ENCODE measurements at regions of chr15 and their contacts with region 1.

Region 1: GRCh38 chr15:76973362-76973743 is 21.6 kb upstream of the PSTPIP1 start:
- DNase-seq: no peak
- ATAC-seq: peak; percentile 86
- H3K4me3 ChIP-seq: no peak overlapping the region
- H3K27ac ChIP-seq: no peak overlapping the region
- H3K4me1 ChIP-seq: no peaks in the 10 kb centered on the region
- H3K27me3 ChIP-seq: no peaks in the 10 kb centered on the region
- CTCF ChIP-seq: peak; percentile 72 to 79 (median 73)
- EP300 ChIP-seq: no peak
- POLR2A ChIP-seq: no peak
- RAD21 ChIP-seq: peak; percentile 89

Region 2: GRCh38 chr15:76941636-76942035 is 31.7 kb before region 1 on chr15:
- CTCF ChIA-PET with region 1: interaction called, 16 read pairs
- POLR2A ChIA-PET with region 1: no interaction called
- RAD21 ChIA-PET with region 1: interaction called, 5 read pairs
- SMC1A ChIA-PET with region 1: interaction called, 5 read pairs
- in situ Hi-C with region 1: no loop called
- intact Hi-C with region 1: no loop called
- DNase-seq: no peak
- ATAC-seq: no peak
- H3K4me3 ChIP-seq: no peak overlapping the region
- H3K27ac ChIP-seq: no peak overlapping the region
- H3K4me1 ChIP-seq: peaks cover 2% of the 10 kb centered on the region; the same call in 1 of the 2 replicates
- H3K27me3 ChIP-seq: no peaks in the 10 kb centered on the region
- CTCF ChIP-seq: no peak
- EP300 ChIP-seq: no peak
- POLR2A ChIP-seq: no peak
- RAD21 ChIP-seq: no peak

Region 3: GRCh38 chr15:77002954-77003912 is 29.9 kb after region 1 on chr15:
- CTCF ChIA-PET with region 1: interaction called, 30 read pairs
- POLR2A ChIA-PET with region 1: interaction called, 4 read pairs
- RAD21 ChIA-PET with region 1: interaction called, 16 read pairs
- SMC1A ChIA-PET with region 1: interaction called, 99 read pairs
- in situ Hi-C with region 1: no loop called
- intact Hi-C with region 1: no loop called
- DNase-seq: peak; percentile 77
- ATAC-seq: peak; percentile 90
- H3K4me3 ChIP-seq: peak overlapping the region; percentile 26; the same call in 1 of the 2 replicates
- H3K27ac ChIP-seq: peak overlapping the region; percentile 16
- H3K4me1 ChIP-seq: peaks cover 27% of the 10 kb centered on the region
- H3K27me3 ChIP-seq: no peaks in the 10 kb centered on the region
- CTCF ChIP-seq: no peak
- EP300 ChIP-seq: peak in 1 of 2 experiments; percentile 20; a peak in 1 of 4 replicates
- POLR2A ChIP-seq: no peak
- RAD21 ChIP-seq: no peak

Region 4: DNA sequence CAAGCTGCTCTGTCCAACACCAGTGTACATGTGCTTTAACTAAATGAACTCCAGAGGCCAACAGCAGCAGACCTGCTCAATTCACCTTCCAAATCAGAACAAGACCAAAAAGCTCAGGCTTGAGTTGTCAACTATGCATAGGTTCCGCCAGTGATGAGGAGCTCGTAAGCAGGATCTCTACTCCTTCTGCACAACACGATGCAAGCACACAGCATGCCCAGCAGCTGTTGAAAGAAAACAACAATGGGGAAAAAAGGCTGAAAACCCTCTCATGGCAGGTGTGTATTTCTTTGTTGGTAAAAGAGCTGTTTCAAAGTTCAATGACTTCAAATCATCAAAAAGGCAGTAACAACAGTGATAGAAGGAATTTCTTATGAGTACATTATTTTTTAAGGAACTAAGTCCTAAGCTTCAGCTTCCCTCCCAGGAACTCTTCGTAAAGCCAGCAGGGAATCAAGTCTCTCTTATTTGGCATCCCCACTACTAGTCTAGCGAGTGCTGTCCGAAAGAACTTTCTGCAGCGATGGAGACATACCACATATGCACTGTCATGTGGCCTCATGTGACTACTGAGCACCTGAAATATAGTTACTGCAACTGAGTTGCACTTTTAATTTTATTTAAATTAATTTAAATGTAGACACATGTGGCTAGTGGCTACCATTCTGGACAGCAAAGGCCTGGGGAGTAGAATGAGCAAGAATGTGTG is 73.5 kb after region 1 on chr15:
- CTCF ChIA-PET with region 1: interaction called, 9 read pairs
- POLR2A ChIA-PET with region 1: no interaction called
- RAD21 ChIA-PET with region 1: interaction called, 3 read pairs
- SMC1A ChIA-PET with region 1: interaction called, 10 read pairs
- in situ Hi-C with region 1: no loop called
- intact Hi-C with region 1: no loop called
- DNase-seq: no peak
- ATAC-seq: no peak
- H3K4me3 ChIP-seq: no peak overlapping the region
- H3K27ac ChIP-seq: no peak overlapping the region
- H3K4me1 ChIP-seq: no peaks in the 10 kb centered on the region
- H3K27me3 ChIP-seq: no peaks in the 10 kb centered on the region
- CTCF ChIP-seq: no peak
- EP300 ChIP-seq: no peak
- POLR2A ChIP-seq: no peak
- RAD21 ChIP-seq: no peak

Region 5: GRCh38 chr15:77099741-77100463 is 126.5 kb after region 1 on chr15:
- CTCF ChIA-PET with region 1: interaction called, 23 read pairs
- POLR2A ChIA-PET with region 1: no interaction called
- RAD21 ChIA-PET with region 1: interaction called, 6 read pairs
- SMC1A ChIA-PET with region 1: interaction called, 23 read pairs
- in situ Hi-C with region 1: no loop called
- intact Hi-C with region 1: no loop called
- DNase-seq: no peak
- ATAC-seq: no peak
- H3K4me3 ChIP-seq: no peak overlapping the region
- H3K27ac ChIP-seq: no peak overlapping the region
- H3K4me1 ChIP-seq: no peaks in the 10 kb centered on the region
- H3K27me3 ChIP-seq: no peaks in the 10 kb centered on the region; a peak in 1 of 4 replicates
- CTCF ChIP-seq: no peak
- EP300 ChIP-seq: no peak
- POLR2A ChIP-seq: no peak
- RAD21 ChIP-seq: no peak

Region 6: DNA sequence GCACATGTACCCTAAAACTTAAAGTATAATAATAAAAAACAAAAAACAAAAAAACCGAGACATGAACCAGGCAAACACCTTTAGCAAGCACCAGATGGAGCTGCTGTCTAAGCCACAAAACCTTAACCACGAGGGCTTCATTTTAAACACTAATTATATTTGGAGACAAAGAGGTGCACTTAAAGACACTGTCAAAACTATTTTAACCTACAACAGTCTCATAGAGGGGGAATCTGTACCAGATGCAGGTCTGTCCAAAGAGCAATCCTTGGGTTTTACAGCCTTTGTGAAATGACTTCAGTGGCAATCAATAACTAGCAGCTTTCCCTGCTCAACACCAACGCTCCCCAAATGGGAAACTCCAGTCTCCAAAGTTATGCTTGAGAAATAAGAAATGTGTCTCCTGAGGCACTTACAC is 213.2 kb after region 1 on chr15:
- CTCF ChIA-PET with region 1: interaction called, 44 read pairs
- POLR2A ChIA-PET with region 1: interaction called, 3 read pairs
- RAD21 ChIA-PET with region 1: interaction called, 37 read pairs
- SMC1A ChIA-PET with region 1: interaction called, 105 read pairs
- in situ Hi-C with region 1: no loop called
- intact Hi-C with region 1: no loop called
- DNase-seq: peak; percentile 39
- ATAC-seq: peak; percentile 32
- H3K4me3 ChIP-seq: no peak overlapping the region
- H3K27ac ChIP-seq: peak overlapping the region; percentile 59
- H3K4me1 ChIP-seq: peaks cover 61% of the 10 kb centered on the region
- H3K27me3 ChIP-seq: no peaks in the 10 kb centered on the region
- CTCF ChIP-seq: peak; percentile 64 to 73 (median 67)
- EP300 ChIP-seq: no peak
- POLR2A ChIP-seq: no peak
- RAD21 ChIP-seq: peak; percentile 95

Region 7: GRCh38 chr15:77369168-77369567 is 395.8 kb after region 1 on chr15:
- CTCF ChIA-PET with region 1: no interaction called
- POLR2A ChIA-PET with region 1: no interaction called
- RAD21 ChIA-PET with region 1: no interaction called
- SMC1A ChIA-PET with region 1: no interaction called
- in situ Hi-C with region 1: no loop called
- intact Hi-C with region 1: no loop called
- DNase-seq: no peak
- ATAC-seq: peak; percentile 64
- H3K4me3 ChIP-seq: no peak overlapping the region
- H3K27ac ChIP-seq: no peak overlapping the region
- H3K4me1 ChIP-seq: no peaks in the 10 kb centered on the region
- H3K27me3 ChIP-seq: no peaks in the 10 kb centered on the region
- CTCF ChIP-seq: no peak
- EP300 ChIP-seq: no peak
- POLR2A ChIP-seq: no peak
- RAD21 ChIP-seq: no peak

Measured in GM12878 (cell line).